Sigmoid colon (tissue), 7 donors: ENCODE measurements at regions of chr2 and their contacts with region 1.

Region 1: DNA sequence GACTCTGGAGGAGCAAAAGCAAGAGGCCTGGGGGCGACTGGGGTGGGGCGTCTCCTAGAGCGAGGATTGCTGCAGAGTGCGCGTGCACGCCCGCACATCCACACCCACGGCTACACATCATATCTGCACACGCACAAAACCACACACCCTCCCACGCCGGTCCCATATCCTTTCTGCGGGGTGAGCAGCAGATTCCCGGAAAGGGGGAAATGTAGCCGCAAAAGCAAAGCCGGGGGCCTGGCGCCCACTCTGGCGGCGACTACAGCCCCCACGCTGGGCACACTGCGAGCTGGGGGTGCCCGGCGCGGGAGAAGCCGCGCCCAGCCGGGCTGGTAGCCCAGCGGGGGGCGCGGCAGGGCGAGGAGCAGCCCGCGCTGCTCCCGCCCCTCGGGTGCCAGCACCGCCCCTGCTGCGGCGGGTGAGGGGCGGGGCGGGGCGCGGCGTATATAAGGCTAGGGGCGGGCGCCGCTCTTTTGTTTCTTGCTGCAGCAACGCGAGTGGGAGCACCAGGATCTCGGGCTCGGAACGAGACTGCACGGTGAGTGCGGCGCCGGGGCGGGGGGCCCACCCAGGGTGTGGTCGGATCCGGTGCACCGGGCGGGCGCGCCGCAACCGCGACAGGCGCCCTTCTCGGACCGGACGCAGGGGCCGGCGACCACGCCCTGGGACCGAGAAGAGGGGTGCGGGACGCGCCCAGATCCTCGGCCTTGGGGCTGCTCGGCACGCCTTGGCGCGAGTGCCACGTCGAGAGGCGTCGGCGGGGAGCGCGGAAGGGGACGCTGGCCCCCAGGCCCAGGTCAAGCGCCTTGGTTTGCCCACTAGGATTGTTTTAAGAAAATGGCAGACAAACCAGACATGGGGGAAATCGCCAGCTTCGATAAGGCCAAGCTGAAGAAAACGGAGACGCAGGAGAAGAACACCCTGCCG is at the start of gene TMSB10:
- DNase-seq: peak; percentile 94
- H3K4me3 ChIP-seq: peak within 1 kb of the TSS; percentile 77 to 99 (median 98)
- H3K27ac ChIP-seq: peak within 1 kb of the TSS; percentile 84 to 98 (median 94)
- H3K4me1 ChIP-seq: peaks cover 0 to 19% (median 10%) of the 10 kb centered on the region in 4 donors
- H3K27me3 ChIP-seq: no peaks in the 10 kb centered on the region
- CTCF ChIP-seq: no peak
- EP300 ChIP-seq: no peak
- POLR2A ChIP-seq: peak; percentile 77 to 83
- total RNA-seq, gene TMSB10: 1,887 to 2,459 (median 2,033) TPM

Region 2: GRCh38 chr2:84516234-84516986 is 389.0 kb before region 1 on chr2 and contains the start of gene DNAH6:
- intact Hi-C with region 1: loop called (anchors 10 kb)
- DNase-seq: peak; percentile 97
- H3K4me3 ChIP-seq: peak within 1 kb of the TSS; percentile 32 to 55 (median 50)
- H3K27ac ChIP-seq: peak within 1 kb of the TSS; percentile 21 to 45 (median 36)
- H3K4me1 ChIP-seq: peaks cover 0 to 4% (median 0%) of the 10 kb centered on the region in 4 donors
- H3K27me3 ChIP-seq: no peaks in the 10 kb centered on the region
- CTCF ChIP-seq: no peak
- EP300 ChIP-seq: no peak
- POLR2A ChIP-seq: no peak
- total RNA-seq, gene DNAH6: 0.33 to 0.55 (median 0.45) TPM

Region 3: GRCh38 chr2:84970868-84971509 is 65.5 kb after region 1 on chr2 and contains the start of gene KCMF1:
- intact Hi-C with region 1: loop called (anchors 1 kb)
- DNase-seq: peak; percentile 91
- H3K4me3 ChIP-seq: peak within 1 kb of the TSS; percentile 67 to 98 (median 77)
- H3K27ac ChIP-seq: peak within 1 kb of the TSS; percentile 96 to 97 (median 97)
- H3K4me1 ChIP-seq: peaks cover 0 to 56% (median 47%) of the 10 kb centered on the region in 4 donors
- H3K27me3 ChIP-seq: no peaks in the 10 kb centered on the region
- CTCF ChIP-seq: no peak
- EP300 ChIP-seq: no peak
- POLR2A ChIP-seq: no peak
- total RNA-seq, gene KCMF1: 35.7 to 64.5 (median 39.6) TPM